Ascending aorta (tissue), 2 donors: ENCODE measurements at regions of chr14 and their contacts with region 1.

Region 1: GRCh38 chr14:77151918-77152588 is 10.5 kb upstream of the ZDHHC22 start:
- DNase-seq: no peak
- H3K4me3 ChIP-seq: no peak overlapping the region
- H3K27ac ChIP-seq: no peak overlapping the region
- H3K4me1 ChIP-seq: peaks cover 0 to 5% of the 10 kb centered on the region in 2 donors
- H3K27me3 ChIP-seq: no peaks in the 10 kb centered on the region
- CTCF ChIP-seq: peak in 1 of 3 experiments; percentile 33

Region 2: GRCh38 chr14:77314043-77314442 is 162.0 kb after region 1 on chr14:
- intact Hi-C with region 1: loop called (anchors 10 kb)
- DNase-seq: no peak
- H3K4me3 ChIP-seq: no peak overlapping the region
- H3K27ac ChIP-seq: no peak overlapping the region
- H3K4me1 ChIP-seq: peaks cover 0 to 3% of the 10 kb centered on the region in 2 donors
- H3K27me3 ChIP-seq: no peaks in the 10 kb centered on the region
- CTCF ChIP-seq: no peak